ENCODE measurements at regions of chr17 and their contacts with region 1.

Region 1: DNA sequence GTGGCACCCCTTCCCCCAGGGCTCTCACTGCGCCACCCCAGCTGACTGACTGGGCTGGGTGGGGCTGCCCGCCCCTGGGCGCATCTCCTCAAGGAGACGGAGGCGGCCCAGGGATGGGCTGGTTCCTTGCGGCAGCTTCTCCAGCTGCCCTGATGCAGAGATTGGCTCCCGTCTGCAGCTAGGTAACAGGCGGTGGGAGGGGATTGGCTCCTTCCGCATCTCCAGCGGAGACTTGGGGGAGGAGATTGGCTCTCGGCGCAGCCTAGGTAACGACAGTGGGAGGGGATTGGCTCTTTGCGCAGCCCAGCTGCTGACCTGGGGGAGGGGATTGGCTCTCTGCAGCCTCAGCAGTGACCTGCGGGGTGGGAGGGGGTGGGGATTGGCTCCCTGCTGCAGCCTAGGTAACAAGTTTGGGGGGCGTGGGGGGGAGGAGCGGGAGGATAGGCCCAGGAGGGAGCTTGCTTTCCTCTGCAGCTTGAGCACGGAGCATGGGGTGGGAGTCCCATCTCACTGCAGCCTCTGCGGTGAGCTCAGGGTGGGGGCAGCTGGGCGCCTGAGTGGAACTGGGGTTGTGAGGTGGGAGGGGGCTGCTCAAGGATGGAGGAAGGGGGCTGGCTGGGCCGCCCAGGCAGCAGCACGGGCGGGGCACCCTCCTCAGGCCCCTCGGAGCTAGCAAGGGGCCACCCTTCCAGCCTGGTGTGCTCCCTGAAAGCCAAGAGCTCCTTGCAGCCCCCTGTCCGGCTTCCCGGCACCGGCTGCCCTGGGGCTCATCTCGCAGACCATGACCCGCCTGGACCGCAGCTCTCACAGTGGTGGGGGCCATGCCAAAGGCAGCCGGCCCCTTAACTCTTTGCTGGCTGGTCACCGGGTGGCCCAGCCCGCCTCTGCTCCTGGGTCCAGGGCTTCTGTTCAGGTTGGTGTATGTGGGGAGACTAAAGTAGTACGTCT is 6.4 kb downstream of the NFE2L1 start:
- DNase-seq: no peak
- ATAC-seq: no peak
- H3K4me3 Mint-ChIP-seq: peak overlapping the region; percentile 48
- H3K27ac Mint-ChIP-seq: peak overlapping the region; percentile 99
- H3K4me1 Mint-ChIP-seq: peaks cover 62% of the 10 kb centered on the region
- H3K27me3 Mint-ChIP-seq: no peaks in the 10 kb centered on the region

Region 2: DNA sequence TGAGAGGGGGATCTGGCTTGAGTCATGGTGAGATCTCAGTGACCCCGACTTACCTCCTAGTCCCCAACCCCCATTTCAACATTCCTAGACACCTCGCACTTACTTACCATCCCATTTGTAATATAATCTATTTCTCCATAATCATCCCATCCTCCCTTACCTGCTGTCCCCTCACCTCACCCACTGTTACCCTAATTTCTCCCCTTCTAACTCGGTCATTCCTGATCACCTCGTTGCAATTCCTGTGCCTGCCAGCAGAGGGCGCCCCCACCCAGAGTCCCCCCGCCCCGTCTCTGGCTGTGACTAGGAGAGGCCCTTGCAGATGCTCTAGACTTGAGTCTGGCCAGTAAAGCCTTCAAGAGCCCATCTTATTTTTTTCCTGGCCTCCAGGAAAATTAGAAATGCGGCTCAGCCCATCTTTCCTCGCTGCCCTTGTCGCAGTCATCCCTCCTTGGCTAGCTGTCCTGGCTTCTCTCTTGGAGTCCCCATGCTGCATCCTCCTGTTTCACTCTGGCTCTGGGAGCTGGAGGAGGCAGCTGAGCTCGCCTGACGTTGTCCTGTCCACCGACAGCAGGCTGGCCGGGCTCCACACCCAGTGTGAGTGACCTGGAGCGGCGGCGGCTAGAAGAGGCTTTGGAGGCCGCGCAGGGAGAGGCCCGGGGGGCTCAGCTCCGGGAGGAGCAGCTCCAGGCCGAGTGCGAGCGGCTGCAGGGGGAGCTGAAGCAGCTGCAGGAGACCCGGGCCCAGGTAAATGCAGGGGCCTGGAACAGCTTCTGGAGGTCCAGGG is 355.6 kb before region 1 on chr17:
- CTCF ChIA-PET with region 1: no interaction called
- POLR2A ChIA-PET with region 1: no interaction called
- intact Hi-C with region 1: no loop called
- DNase-seq: peak; percentile 91
- ATAC-seq: peak; percentile 37
- H3K4me3 Mint-ChIP-seq: no peak overlapping the region
- H3K27ac Mint-ChIP-seq: peak overlapping the region; percentile 35
- H3K4me1 Mint-ChIP-seq: peaks cover 78% of the 10 kb centered on the region
- H3K27me3 Mint-ChIP-seq: no peaks in the 10 kb centered on the region

Region 3: DNA sequence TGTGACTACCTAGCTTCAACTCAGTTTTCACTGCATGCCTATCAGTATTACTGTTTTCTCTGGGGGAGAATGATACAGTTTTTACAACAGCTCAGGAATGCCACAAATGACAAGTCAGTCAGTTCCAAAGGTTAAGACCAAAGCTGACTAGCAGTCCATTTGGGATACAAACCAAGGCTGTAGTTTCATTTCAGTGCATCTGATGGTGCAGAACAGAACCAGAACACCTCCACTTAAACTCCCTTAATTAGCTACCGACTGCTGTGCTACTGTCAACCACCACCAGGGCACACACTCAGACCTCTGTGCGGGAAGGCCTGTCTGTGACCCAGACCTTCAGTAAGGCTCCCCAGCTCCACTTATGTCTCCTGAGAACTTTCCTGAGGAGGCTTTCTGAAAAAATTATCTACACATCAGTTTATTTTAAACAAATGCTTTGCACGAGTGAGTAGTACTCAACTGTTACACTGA is 14.0 kb after region 1 on chr17:
- CTCF ChIA-PET with region 1: interaction called, 16 read pairs
- POLR2A ChIA-PET with region 1: no interaction called
- intact Hi-C with region 1: no loop called
- DNase-seq: peak; percentile 36
- ATAC-seq: peak; percentile 78
- H3K4me3 Mint-ChIP-seq: no peak overlapping the region
- H3K27ac Mint-ChIP-seq: no peak overlapping the region
- H3K4me1 Mint-ChIP-seq: peaks cover 2% of the 10 kb centered on the region
- H3K27me3 Mint-ChIP-seq: no peaks in the 10 kb centered on the region

Region 4: GRCh38 chr17:48074315-48075081 is 20.0 kb after region 1 on chr17:
- CTCF ChIA-PET with region 1: interaction called, 17 read pairs
- POLR2A ChIA-PET with region 1: interaction called, 4 read pairs
- intact Hi-C with region 1: no loop called
- DNase-seq: peak; percentile 86
- ATAC-seq: peak; percentile 75
- H3K4me3 Mint-ChIP-seq: no peak overlapping the region
- H3K27ac Mint-ChIP-seq: no peak overlapping the region
- H3K4me1 Mint-ChIP-seq: no peaks in the 10 kb centered on the region
- H3K27me3 Mint-ChIP-seq: no peaks in the 10 kb centered on the region

Region 5: DNA sequence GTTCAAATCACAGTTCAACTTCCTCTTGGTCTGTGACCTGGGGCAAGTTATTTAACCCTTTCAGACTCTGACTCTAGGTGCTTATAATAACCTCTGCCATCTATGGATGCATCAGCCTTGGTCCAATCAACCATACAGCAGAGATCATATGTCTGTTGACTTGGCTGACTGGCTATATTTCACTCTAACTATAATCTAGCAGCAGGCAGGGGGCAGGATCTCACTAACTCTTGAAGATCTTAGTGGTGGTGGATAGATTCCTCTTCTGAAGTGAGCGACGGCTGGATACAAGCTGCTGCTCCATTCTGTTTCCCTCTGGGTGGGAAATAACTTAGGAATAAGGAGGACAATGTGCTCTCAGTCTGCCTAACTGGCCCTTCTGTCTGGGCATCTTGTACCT is 228.9 kb after region 1 on chr17:
- CTCF ChIA-PET with region 1: no interaction called
- POLR2A ChIA-PET with region 1: no interaction called
- intact Hi-C with region 1: no loop called
- DNase-seq: no peak
- ATAC-seq: no peak
- H3K4me3 Mint-ChIP-seq: no peak overlapping the region
- H3K27ac Mint-ChIP-seq: no peak overlapping the region
- H3K4me1 Mint-ChIP-seq: peaks cover 12% of the 10 kb centered on the region
- H3K27me3 Mint-ChIP-seq: no peaks in the 10 kb centered on the region

Region 6: GRCh38 chr17:48523010-48523409 is 468.5 kb after region 1 on chr17:
- CTCF ChIA-PET with region 1: no interaction called
- POLR2A ChIA-PET with region 1: no interaction called
- intact Hi-C with region 1: no loop called
- DNase-seq: no peak
- ATAC-seq: no peak
- H3K4me3 Mint-ChIP-seq: no peak overlapping the region
- H3K27ac Mint-ChIP-seq: no peak overlapping the region
- H3K4me1 Mint-ChIP-seq: no peaks in the 10 kb centered on the region
- H3K27me3 Mint-ChIP-seq: peaks cover 46% of the 10 kb centered on the region

Measured in activated CD4-positive, alpha-beta T cell treated with anti-CD3 and anti-CD28 coated beads for 36 hours (primary cell).